MCF 10A (cell line): ENCODE measurements at regions of chr19 and their contacts with region 1.

Region 1: DNA sequence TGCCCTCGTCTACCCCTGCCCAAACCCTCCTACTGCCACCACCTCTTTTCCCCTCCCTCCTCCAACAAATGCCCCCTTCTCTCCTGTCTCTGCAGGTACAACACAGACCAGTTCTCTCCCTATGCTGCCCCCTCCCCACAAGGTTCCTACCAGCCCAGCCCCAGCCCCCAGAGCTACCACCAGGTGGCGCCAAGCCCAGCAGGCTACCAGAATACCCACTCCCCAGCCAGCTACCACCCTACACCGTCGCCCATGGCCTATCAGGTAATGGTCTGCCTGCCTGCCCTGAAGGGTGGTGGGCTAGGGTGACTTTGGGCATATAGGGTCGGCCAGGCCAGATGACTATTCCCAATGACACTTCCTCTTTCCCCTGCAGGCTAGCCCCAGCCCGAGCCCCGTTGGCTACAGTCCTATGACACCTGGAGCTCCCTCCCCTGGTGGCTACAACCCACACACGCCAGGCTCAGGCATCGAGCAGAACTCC is 6.5 kb upstream of the TIMM50 start:
- DNase-seq: peak; percentile 46
- H3K4me3 Mint-ChIP-seq: no peak overlapping the region
- H3K27ac Mint-ChIP-seq: no peak overlapping the region
- H3K4me1 Mint-ChIP-seq: no peaks in the 10 kb centered on the region
- H3K27me3 Mint-ChIP-seq: no peaks in the 10 kb centered on the region
- CTCF ChIP-seq: peak; percentile 86

Region 2: GRCh38 chr19:39524495-39524894 is 50.3 kb after region 1 on chr19:
- CTCF ChIA-PET with region 1: interaction called, 11 read pairs
- POLR2A ChIA-PET with region 1: no interaction called
- intact Hi-C with region 1: no loop called
- DNase-seq: no peak
- H3K4me3 Mint-ChIP-seq: no peak overlapping the region
- H3K27ac Mint-ChIP-seq: no peak overlapping the region
- H3K4me1 Mint-ChIP-seq: no peaks in the 10 kb centered on the region
- H3K27me3 Mint-ChIP-seq: no peaks in the 10 kb centered on the region
- CTCF ChIP-seq: no peak